ENCODE measurements at regions of chr12 and their contacts with region 1.

Region 1: GRCh38 chr12:70849265-70849960 is 71.1 kb downstream of the PTPRR start:
- DNase-seq: no peak
- ATAC-seq: peak in 6 of 8 donors; percentile 25 to 76 (median 60)
- H3K4me3 ChIP-seq: no peak overlapping the region
- H3K27ac ChIP-seq: no peak overlapping the region
- H3K4me1 ChIP-seq: peaks cover 0 to 10% (median 0%) of the 10 kb centered on the region in 9 donors
- H3K27me3 ChIP-seq: no peaks in the 10 kb centered on the region
- CTCF ChIP-seq: peak in 7 of 9 donors; percentile 30 to 64 (median 46)

Region 2: GRCh38 chr12:69879041-69879960 is 970.1 kb before region 1 on chr12:
- intact Hi-C with region 1: loop called in 1 of 10 experiments (anchors 10 kb)
- DNase-seq: peak; percentile 45 to 73
- ATAC-seq: peak; percentile 82 to 95 (median 94)
- H3K4me3 ChIP-seq: peak overlapping the region in 6 of 10 donors; percentile 16 to 33 (median 24)
- H3K27ac ChIP-seq: no peak overlapping the region
- H3K4me1 ChIP-seq: peaks cover 0 to 10% (median 4%) of the 10 kb centered on the region in 9 donors
- H3K27me3 ChIP-seq: no peaks in the 10 kb centered on the region
- CTCF ChIP-seq: peak; percentile 78 to 97 (median 90)